ENCODE measurements at regions of chr13 and their contacts with region 1.

Region 1: DNA sequence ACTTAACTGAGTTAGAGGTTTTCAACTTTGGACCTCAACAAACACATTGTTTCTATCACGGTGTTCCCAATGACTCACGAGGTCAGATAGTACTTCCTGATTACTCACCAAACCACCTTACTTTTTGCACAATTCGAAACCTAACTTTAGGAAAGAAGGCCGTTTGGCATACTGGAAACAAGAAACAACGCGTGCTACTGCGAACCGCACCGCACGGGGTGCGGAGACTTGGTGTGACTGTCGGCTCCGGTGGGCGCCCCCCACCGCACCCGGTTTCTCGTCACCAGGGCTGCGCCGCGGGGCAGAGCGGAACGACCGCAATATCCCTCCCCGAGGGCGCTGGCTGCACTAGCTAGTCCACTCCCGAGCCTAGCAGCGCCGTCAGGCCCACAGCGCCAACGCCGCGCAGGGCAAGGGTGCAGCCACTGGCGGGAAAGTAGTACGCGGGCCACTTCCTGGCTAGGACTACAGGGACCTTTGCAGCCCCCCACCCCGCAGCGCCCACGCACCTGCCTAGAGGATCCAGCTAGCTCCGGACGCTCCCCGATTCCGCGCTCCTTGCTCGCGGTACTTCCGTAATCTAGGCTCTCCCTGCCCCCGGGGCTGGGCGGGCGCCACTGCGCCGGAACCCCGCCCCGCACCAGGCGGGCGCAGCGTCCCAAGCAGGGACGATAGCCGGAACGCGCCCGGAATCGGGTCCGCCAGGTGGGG is at the start of gene PARP4:
- DNase-seq: peak; percentile 66
- H3K4me3 Mint-ChIP-seq: peak within 1 kb of the TSS; percentile 87
- H3K27ac Mint-ChIP-seq: peak within 1 kb of the TSS; percentile 98
- H3K4me1 Mint-ChIP-seq: peaks cover 50% of the 10 kb centered on the region
- H3K27me3 Mint-ChIP-seq: peaks cover 2% of the 10 kb centered on the region
- total RNA-seq, gene PARP4: 41.3 and 41.9 TPM in 2 replicates

Region 2: GRCh38 chr13:23375001-23375971 is 1137.1 kb before region 1 on chr13:
- intact Hi-C with region 1: loop called (anchors 1 kb)
- DNase-seq: peak; percentile 92
- H3K4me3 Mint-ChIP-seq: peak overlapping the region; percentile 78
- H3K27ac Mint-ChIP-seq: peak overlapping the region; percentile 36
- H3K4me1 Mint-ChIP-seq: peaks cover 74% of the 10 kb centered on the region
- H3K27me3 Mint-ChIP-seq: peaks cover 4% of the 10 kb centered on the region

Region 3: GRCh38 chr13:24005755-24006281 is 506.5 kb before region 1 on chr13:
- intact Hi-C with region 1: no loop called
- DNase-seq: no peak
- H3K4me3 Mint-ChIP-seq: no peak overlapping the region
- H3K27ac Mint-ChIP-seq: no peak overlapping the region
- H3K4me1 Mint-ChIP-seq: no peaks in the 10 kb centered on the region
- H3K27me3 Mint-ChIP-seq: peaks cover 22% of the 10 kb centered on the region

Region 4: DNA sequence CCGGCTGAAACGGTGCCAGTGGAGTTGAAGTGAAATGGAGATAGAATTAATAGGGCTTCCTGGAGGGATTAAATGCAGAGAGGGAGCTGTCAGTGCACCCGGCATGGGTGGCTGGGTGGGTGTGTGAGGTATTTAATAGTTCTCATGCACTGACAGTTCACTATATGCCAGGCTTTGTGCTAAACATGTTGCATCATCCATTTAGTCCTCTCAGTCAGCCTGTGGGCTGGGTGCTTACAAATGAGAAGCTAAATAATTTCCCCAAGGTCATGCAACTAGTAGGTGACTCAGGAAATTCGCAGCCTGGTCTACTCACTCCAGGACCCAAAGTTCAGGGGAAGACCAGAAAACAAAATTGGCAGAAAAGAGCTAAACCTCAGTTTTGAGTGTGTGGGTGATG is 415.3 kb before region 1 on chr13:
- intact Hi-C with region 1: loop called (anchors 1 kb)
- DNase-seq: peak; percentile 7
- H3K4me3 Mint-ChIP-seq: peak overlapping the region; percentile 62
- H3K27ac Mint-ChIP-seq: peak overlapping the region; percentile 95
- H3K4me1 Mint-ChIP-seq: peaks cover 21% of the 10 kb centered on the region
- H3K27me3 Mint-ChIP-seq: peaks cover 15% of the 10 kb centered on the region

Region 5: DNA sequence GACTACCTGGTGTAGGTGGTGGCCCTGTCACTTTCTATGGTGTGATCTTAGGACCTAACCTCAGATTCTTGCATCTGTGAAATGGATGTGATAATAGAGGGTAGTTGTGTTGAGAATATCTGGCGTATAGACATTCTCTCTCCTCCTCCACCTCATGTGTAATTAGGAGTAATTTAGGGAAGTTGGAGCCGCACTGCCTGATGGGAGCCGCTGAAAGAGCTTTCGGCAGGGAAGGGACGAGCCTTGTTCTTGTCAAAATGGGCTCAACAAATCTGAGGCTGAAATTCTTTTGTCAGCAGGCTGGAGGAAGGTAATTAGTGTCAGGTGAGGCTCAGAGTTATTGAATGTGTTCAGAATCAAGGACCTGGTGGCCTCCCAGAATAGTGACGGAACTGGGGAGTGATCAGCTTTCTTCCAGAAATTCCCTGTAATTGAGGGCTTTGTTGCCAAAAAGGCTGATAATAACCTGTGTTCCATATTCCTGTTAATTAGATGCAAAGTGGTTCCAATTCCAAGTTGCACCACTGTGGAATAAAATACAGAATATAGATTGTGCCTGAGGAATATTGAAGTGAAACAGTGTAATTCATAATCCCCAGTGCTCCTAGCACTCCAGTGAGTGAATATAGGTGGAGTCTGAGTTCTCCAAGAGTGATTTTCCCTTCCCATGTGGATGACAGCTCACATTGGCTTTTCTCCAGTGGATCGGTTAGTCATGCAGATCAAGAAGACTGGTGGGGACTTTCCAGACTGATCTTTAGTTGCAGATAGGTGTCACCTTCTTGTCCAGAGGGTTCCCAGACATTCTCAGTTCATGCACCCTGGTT is 304.3 kb before region 1 on chr13:
- intact Hi-C with region 1: no loop called
- DNase-seq: no peak
- H3K4me3 Mint-ChIP-seq: no peak overlapping the region
- H3K27ac Mint-ChIP-seq: no peak overlapping the region
- H3K4me1 Mint-ChIP-seq: peaks cover 38% of the 10 kb centered on the region
- H3K27me3 Mint-ChIP-seq: no peaks in the 10 kb centered on the region

Region 6: GRCh38 chr13:24254146-24254841 is 258.1 kb before region 1 on chr13:
- intact Hi-C with region 1: loop called (anchors 5 kb)
- DNase-seq: peak; percentile 47
- H3K4me3 Mint-ChIP-seq: peak overlapping the region; percentile 86
- H3K27ac Mint-ChIP-seq: peak overlapping the region; percentile 91
- H3K4me1 Mint-ChIP-seq: peaks cover 84% of the 10 kb centered on the region
- H3K27me3 Mint-ChIP-seq: no peaks in the 10 kb centered on the region

Region 7: DNA sequence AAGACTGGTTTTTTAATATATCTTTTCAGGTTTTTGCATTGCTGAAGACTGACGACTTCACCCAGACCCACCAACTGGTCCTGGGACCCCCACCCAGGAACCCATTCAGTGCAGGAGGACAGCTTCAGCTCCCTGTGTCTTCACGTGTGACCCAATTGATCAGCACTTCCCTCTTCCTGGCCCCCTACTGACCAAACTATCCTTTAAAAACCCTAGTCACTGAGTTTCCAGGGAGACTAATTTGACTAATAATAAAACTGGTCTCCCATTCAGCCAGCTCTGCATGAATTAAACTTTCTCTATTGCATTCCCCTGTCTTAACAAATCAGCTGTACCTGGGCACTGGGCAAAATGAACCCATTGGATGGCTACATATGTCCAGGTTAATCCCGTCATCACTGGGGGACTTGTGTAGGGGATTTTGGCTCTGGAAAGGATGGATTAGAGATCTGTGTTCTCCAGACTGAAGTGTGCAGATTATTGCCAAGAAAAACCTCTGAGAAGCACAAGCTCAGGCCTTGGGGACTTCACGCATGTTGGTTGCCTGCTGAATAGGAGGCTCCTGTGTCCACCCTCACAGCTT is 16.6 kb after region 1 on chr13:
- intact Hi-C with region 1: no loop called
- DNase-seq: no peak
- H3K4me3 Mint-ChIP-seq: no peak overlapping the region
- H3K27ac Mint-ChIP-seq: no peak overlapping the region
- H3K4me1 Mint-ChIP-seq: no peaks in the 10 kb centered on the region
- H3K27me3 Mint-ChIP-seq: peaks cover 49% of the 10 kb centered on the region

Region 8: DNA sequence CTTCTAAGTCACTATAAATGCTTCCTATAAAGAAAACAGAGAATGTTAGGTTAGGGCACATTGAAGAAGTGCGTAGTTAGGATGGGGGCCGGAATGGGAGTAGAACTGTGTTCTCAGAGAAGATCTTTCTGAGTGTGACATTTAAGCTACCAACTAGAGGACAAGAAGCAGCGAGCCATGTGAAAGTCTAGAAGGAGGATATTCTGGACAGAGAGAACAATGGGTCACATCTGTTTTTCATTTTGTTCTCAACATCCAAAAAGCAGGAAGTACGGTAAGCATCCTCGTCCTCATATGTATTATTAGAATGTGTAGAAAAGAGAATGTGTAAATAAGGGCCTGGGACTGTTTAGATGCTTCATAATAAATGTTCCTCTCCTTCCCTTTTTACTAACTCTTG is 44.7 kb after region 1 on chr13:
- intact Hi-C with region 1: loop called (anchors 2 kb)
- DNase-seq: no peak
- H3K4me3 Mint-ChIP-seq: no peak overlapping the region
- H3K27ac Mint-ChIP-seq: no peak overlapping the region
- H3K4me1 Mint-ChIP-seq: peaks cover 13% of the 10 kb centered on the region
- H3K27me3 Mint-ChIP-seq: peaks cover 44% of the 10 kb centered on the region

Region 9: GRCh38 chr13:24683838-24684599 is 171.7 kb after region 1 on chr13:
- intact Hi-C with region 1: loop called (anchors 1 kb)
- DNase-seq: peak; percentile 30
- H3K4me3 Mint-ChIP-seq: peak overlapping the region; percentile 28
- H3K27ac Mint-ChIP-seq: peak overlapping the region; percentile 57
- H3K4me1 Mint-ChIP-seq: peaks cover 32% of the 10 kb centered on the region
- H3K27me3 Mint-ChIP-seq: peaks cover 45% of the 10 kb centered on the region

Region 10: DNA sequence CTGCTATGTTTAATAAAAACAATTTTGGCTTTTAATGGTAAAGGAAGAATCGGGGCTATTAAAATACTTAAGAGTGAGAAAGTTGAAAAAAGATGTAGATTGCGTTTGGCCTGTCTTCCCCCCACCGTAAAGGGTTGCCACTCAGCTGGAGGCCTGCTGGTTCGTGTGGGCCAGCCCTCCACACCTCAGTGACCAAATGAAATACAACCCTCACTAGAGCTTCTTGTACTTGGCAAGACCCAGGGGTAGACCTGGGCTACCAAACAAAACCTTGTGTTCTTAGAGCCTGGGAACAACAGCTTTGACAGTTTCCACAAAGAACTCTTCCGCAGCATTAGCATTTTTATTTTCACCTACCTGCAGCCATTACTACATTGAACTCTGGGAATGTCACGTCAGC is 430.8 kb after region 1 on chr13:
- intact Hi-C with region 1: loop called (anchors 5 kb)
- DNase-seq: no peak
- H3K4me3 Mint-ChIP-seq: no peak overlapping the region
- H3K27ac Mint-ChIP-seq: no peak overlapping the region
- H3K4me1 Mint-ChIP-seq: no peaks in the 10 kb centered on the region
- H3K27me3 Mint-ChIP-seq: peaks cover 19% of the 10 kb centered on the region

Measured in activated T-helper 1 cell treated with anti-CD3 and anti-CD28 coated beads, Interleukin-12 subunit alpha, Interleukin-12 subunit beta, Interleukin-2, Interleukin-4 antibody, amounts not matched to agents 30 ng/mL and 10 ng/mL and 1 ng/mL, durations not matched to agents 14 hours and 24 hours and 36 hours (primary cell).